Right ventricle myocardium superior (tissue), 1 donor: ENCODE measurements at regions of chr2 and their contacts with region 1.

Region 1: DNA sequence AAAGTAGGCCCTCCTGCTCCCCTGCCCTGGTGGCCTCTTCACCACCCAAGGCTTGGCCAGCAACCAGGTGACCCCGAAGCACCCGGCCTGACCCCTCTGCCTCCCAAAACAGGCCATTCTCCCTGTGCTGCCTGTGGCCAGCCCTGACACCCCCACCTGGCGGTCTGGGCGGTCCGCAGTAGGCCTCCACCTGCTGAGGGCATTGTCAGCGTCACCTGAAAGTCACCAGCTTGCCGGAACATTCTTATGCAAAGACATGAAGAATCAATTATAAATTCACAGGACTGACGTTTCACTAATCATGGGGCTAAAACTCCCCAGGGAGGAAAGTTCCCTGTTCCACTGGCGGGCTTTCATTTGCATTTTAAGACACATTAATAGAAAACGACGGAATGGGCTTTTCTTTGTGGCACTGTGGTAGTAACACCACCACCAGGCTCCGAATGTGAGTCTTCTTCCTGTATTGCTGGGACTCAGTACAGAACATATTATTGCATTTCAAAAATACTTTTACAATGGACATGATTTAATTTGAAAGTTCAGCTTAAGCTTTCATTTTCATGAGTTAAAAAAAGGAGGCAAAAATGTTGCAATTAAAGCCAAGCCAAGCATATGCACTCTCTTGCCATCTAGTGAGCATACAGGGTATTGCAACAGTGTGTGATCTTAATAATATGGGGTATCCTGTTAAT is 57.4 kb downstream of the ADI1 start:
- DNase-seq: peak; percentile 43
- ATAC-seq: no peak

Region 2: DNA sequence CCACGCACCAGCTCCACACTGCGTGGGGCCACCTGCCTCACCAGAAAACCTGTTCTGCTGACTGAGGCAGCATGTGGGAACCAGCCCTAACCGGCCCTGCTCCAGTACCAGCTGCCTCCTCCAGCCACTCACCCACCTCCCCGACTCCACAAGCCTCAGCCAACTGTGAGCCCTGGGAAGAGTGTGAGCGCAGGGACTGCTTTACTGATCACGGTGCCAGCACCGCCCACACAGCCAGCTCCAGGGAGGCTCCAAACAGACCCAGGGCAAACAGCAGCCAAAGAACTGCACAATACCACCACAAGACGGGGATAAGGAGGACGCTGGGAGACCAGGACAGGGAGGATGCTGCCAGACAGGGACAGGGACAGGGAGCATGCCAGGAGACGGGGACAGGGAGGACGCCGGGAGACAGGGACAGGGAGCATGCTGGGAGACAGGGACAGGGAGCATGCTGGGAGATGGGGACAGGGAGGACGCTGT is 112.7 kb before region 1 on chr2:
- intact Hi-C with region 1: no loop called
- DNase-seq: no peak
- ATAC-seq: no peak

Region 3: DNA sequence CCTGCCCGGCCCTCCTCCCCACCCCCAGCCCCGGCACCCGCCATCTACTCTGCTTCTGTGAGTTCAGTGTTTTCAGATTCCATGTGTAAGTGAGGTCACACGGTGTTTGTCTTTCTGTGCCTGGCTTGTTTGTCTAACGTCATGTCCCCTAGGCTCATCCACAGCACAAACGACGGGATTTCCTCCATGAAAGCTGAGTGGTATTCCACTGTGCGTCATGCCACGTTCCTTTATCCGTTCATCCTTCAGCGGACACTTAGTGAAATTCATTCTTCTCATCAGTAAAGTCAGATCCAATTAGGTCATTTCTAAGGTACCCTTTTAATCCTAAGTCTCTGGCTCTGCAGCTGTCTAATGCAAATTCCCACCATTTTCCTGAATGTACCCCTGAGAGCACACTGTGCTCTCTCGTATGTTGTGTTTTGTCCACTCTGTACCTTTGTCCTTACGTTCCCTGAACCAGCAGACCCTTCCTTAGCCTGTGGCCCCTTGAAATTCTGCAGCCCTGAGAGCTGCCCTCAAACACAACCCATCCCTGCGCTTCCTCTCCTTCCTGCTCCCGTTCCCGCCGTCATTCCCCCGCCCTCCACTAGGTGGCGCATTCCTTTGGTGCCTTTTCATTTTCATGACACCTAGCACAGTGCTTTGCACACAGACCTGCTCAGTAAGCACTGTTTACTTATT is 38.3 kb before region 1 on chr2:
- intact Hi-C with region 1: loop called (anchors 5 kb)
- DNase-seq: peak; percentile 82
- ATAC-seq: peak; percentile 59

Region 4: GRCh38 chr2:3683748-3684454 is 222.0 kb after region 1 on chr2:
- intact Hi-C with region 1: no loop called
- DNase-seq: no peak
- ATAC-seq: no peak

Region 5: GRCh38 chr2:4528773-4529172 is 1066.8 kb after region 1 on chr2:
- intact Hi-C with region 1: no loop called
- DNase-seq: no peak
- ATAC-seq: no peak